PC-9 (cell line): ENCODE measurements at regions of chr6 and their contacts with region 1.

Region 1: GRCh38 chr6:34295721-34296120 is 46.9 kb upstream of the SMIM29 start:
- DNase-seq: no peak
- H3K4me3 ChIP-seq: no peak overlapping the region
- H3K27ac ChIP-seq: no peak overlapping the region
- H3K4me1 ChIP-seq: no peaks in the 10 kb centered on the region
- H3K27me3 ChIP-seq: no peaks in the 10 kb centered on the region
- CTCF ChIP-seq: no peak

Region 2: DNA sequence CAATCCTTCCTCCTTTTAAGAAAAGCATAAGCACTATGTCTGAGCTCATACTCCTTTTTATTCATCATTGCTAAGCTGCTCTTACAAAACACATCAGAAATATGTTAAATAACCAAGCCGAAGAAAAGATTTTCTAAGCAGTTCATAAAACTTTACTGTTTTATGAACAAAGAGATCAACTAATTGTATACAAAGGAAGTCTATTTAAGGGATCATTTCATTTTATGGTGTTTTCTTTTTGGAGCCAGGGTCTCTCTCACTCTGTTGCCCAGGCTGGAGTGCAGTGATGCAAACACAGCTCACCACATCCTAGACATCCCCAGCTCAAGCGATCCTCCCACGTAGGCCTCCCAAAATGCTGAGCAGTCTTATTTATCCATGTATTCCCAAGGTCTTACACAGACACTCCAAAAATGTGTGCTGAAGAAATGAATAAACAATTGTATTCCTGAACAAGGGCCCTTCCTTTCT is 87.5 kb after region 1 on chr6:
- CTCF ChIA-PET with region 1: interaction called, 10 read pairs
- POLR2A ChIA-PET with region 1: no interaction called
- intact Hi-C with region 1: no loop called
- DNase-seq: no peak
- H3K4me3 ChIP-seq: no peak overlapping the region
- H3K27ac ChIP-seq: no peak overlapping the region
- H3K4me1 ChIP-seq: no peaks in the 10 kb centered on the region
- H3K27me3 ChIP-seq: no peaks in the 10 kb centered on the region
- CTCF ChIP-seq: no peak